Mucosa of descending colon (tissue), 3 donors: ENCODE measurements at regions of chr12 and their contacts with region 1.

Region 1: DNA sequence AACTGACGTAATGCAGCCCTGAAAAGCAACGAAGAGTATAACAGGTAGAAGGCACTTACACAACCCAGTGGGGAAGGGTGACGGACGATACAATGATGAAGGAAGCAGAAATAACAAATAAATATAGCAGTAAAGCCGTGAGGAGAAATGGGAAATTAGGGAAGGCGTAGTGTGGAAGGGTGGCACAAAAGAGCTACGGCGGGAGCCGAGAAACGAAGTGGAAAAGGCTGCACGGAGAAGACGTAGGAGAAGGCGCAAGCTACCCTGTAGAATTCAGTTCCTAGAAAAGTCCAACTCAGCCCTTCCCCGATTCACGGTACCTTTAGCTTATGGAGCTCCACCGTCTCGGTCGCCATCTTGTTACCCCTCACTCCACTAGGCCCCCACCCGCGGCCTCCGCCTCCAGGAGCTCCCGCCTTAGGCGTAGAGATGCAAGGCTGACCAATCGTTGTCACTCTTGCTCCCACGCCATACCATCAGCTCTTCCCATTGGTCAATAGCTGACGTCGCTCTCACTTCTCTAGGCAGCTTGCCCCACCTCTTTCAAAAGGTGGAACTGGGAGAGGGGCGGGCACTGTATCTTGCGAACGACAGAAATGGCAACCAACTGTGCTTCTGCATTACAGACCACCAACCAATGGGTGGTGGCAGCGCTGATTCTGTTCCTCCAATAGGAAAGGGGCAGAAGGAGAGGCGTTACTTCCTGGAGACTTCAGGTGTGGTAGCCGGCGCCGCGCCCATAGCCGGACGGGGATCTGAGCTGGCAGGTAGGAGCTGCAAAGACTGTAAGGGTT is at the starts of genes ORMDL2 and SARNP:
- DNase-seq: peak; percentile 94 to 98 (median 96)
- ATAC-seq: peak; percentile 96
- H3K4me3 ChIP-seq: peak within 1 kb of the TSS; percentile 67
- H3K4me1 ChIP-seq: peaks cover 32% of the 10 kb centered on the region
- CTCF ChIP-seq: no peak
- total RNA-seq, gene ORMDL2: 42.1 to 97.8 (median 74.2) TPM
- total RNA-seq, gene SARNP: 38.7 to 45.9 (median 41.3) TPM

Region 2: GRCh38 chr12:55930771-55931316 is 113.3 kb after region 1 on chr12 and contains the start of gene DGKA:
- intact Hi-C with region 1: loop called in 1 of 2 experiments (anchors 10 kb)
- DNase-seq: peak; percentile 75 to 87 (median 77)
- ATAC-seq: peak; percentile 43
- H3K4me3 ChIP-seq: peak within 1 kb of the TSS; percentile 56
- H3K4me1 ChIP-seq: peaks cover 39% of the 10 kb centered on the region
- CTCF ChIP-seq: peak; percentile 11
- total RNA-seq, gene DGKA: 82.6 to 148 (median 97.0) TPM